ENCODE measurements at regions of chr10 and their contacts with region 1.

Region 1: GRCh38 chr10:128035557-128035973 is 90.7 kb downstream of the MKI67 start:
- DNase-seq: peak; percentile 90
- H3K4me3 Mint-ChIP-seq: no peak overlapping the region
- H3K27ac Mint-ChIP-seq: no peak overlapping the region
- H3K4me1 Mint-ChIP-seq: peaks cover 13% of the 10 kb centered on the region
- H3K27me3 Mint-ChIP-seq: peaks cover 2% of the 10 kb centered on the region

Region 2: DNA sequence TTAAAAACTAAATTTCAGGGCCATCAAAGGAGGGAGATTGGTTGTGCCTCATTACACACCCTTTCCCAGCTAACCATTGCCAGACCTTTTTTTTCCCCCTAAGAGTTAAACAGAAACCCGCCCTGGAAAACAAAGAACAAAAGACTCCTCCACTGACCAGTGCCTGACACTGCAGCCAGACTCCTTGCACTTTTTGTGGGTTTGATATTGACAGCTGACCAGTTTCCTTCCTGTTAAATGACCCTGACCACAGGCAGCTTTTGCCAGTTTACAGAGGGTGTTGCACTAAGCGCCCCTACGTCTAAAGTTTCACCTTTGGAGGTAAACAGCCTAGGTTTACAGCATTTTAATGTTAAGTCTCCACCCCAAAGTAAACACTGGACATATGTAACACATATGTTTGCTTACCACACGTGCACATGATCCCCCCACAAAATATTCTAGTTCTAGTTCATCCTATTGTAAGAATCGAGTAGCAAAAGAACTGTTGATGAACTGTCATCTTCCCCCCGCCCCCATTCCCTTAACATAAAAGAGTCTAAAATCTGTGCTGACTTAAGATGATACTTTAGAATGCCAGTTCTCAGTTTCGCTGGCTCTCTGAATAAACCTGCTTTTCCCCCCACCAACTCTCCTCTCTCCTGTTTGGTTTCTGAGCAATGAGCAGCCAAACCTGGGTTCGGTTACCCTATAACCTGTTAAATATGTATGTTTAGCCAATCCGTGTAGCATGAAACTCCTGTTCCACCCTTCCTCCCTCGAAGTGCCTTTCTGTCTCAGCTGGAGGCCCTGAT is 260.6 kb before region 1 on chr10:
- intact Hi-C with region 1: no loop called
- DNase-seq: no peak
- H3K4me3 Mint-ChIP-seq: no peak overlapping the region
- H3K27ac Mint-ChIP-seq: no peak overlapping the region
- H3K4me1 Mint-ChIP-seq: no peaks in the 10 kb centered on the region
- H3K27me3 Mint-ChIP-seq: no peaks in the 10 kb centered on the region

Region 3: GRCh38 chr10:128047351-128047750 is 11.8 kb after region 1 on chr10:
- intact Hi-C with region 1: loop called (anchors 1 kb)
- DNase-seq: peak; percentile 96
- H3K4me3 Mint-ChIP-seq: peak overlapping the region; percentile 86
- H3K27ac Mint-ChIP-seq: peak overlapping the region; percentile 90
- H3K4me1 Mint-ChIP-seq: peaks cover 48% of the 10 kb centered on the region
- H3K27me3 Mint-ChIP-seq: no peaks in the 10 kb centered on the region

Region 4: GRCh38 chr10:128064108-128064969 is 28.8 kb after region 1 on chr10:
- intact Hi-C with region 1: loop called (anchors 1 kb)
- DNase-seq: peak; percentile 85
- H3K4me3 Mint-ChIP-seq: peak overlapping the region; percentile 77
- H3K27ac Mint-ChIP-seq: peak overlapping the region; percentile 96
- H3K4me1 Mint-ChIP-seq: peaks cover 57% of the 10 kb centered on the region
- H3K27me3 Mint-ChIP-seq: no peaks in the 10 kb centered on the region

Region 5: DNA sequence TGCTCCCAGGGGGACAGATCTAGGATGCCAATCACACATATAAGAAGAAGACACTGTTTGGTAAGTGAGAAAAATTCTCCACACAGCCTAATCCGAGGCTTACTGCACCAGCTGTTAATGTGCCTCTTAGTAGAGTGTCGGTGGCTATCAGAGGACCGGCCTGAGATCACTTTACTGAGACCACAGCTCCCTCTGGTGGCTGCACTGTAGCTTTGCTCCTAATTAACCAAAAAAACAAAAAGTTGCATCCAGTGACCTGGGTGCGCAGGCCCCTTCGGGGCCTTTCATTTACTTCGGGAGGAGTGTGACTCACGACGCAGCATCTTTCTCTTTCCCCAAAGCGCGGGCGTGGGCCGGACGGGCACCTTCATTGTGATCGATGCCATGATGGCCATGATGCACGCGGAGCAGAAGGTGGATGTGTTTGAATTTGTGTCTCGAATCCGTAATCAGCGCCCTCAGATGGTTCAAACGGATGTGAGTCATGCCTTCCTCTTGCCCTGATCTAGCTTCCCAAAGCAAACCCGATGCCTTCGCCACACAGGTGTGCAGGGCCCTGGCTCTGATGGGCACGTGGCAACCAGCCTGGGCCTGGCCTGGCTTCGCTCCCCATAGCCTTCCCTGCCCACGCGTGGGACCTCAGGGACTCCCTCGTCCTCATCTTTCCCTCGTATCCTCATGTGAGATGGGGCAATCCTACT is 33.9 kb after region 1 on chr10:
- intact Hi-C with region 1: loop called (anchors 1 kb)
- DNase-seq: peak; percentile 92
- H3K4me3 Mint-ChIP-seq: no peak overlapping the region
- H3K27ac Mint-ChIP-seq: peak overlapping the region; percentile 34
- H3K4me1 Mint-ChIP-seq: peaks cover 34% of the 10 kb centered on the region
- H3K27me3 Mint-ChIP-seq: no peaks in the 10 kb centered on the region